GM12878 (cell line): ENCODE measurements at regions of chr6 and their contacts with region 1.

Region 1: GRCh38 chr6:11912426-11912825 is 99.7 kb upstream of the HIVEP1 start:
- DNase-seq: no peak
- ATAC-seq: no peak
- H3K4me3 ChIP-seq: no peak overlapping the region
- H3K27ac ChIP-seq: no peak overlapping the region
- H3K4me1 ChIP-seq: no peaks in the 10 kb centered on the region
- H3K27me3 ChIP-seq: no peaks in the 10 kb centered on the region
- CTCF ChIP-seq: no peak
- EP300 ChIP-seq: no peak
- POLR2A ChIP-seq: no peak
- RAD21 ChIP-seq: no peak

Region 2: GRCh38 chr6:11899645-11900044 is 12.8 kb before region 1 on chr6:
- CTCF ChIA-PET with region 1: no interaction called
- POLR2A ChIA-PET with region 1: no interaction called
- RAD21 ChIA-PET with region 1: no interaction called
- SMC1A ChIA-PET with region 1: no interaction called
- in situ Hi-C with region 1: no loop called
- intact Hi-C with region 1: no loop called
- DNase-seq: no peak
- ATAC-seq: no peak
- H3K4me3 ChIP-seq: no peak overlapping the region
- H3K27ac ChIP-seq: no peak overlapping the region
- H3K4me1 ChIP-seq: no peaks in the 10 kb centered on the region
- H3K27me3 ChIP-seq: no peaks in the 10 kb centered on the region
- CTCF ChIP-seq: no peak
- EP300 ChIP-seq: no peak
- POLR2A ChIP-seq: no peak
- RAD21 ChIP-seq: no peak

Region 3: GRCh38 chr6:11929241-11929850 is 16.9 kb after region 1 on chr6:
- CTCF ChIA-PET with region 1: no interaction called
- POLR2A ChIA-PET with region 1: no interaction called
- RAD21 ChIA-PET with region 1: no interaction called
- SMC1A ChIA-PET with region 1: interaction called, 14 read pairs
- in situ Hi-C with region 1: no loop called
- intact Hi-C with region 1: no loop called
- DNase-seq: no peak
- ATAC-seq: no peak
- H3K4me3 ChIP-seq: no peak overlapping the region
- H3K27ac ChIP-seq: no peak overlapping the region
- H3K4me1 ChIP-seq: no peaks in the 10 kb centered on the region
- H3K27me3 ChIP-seq: no peaks in the 10 kb centered on the region
- CTCF ChIP-seq: no peak
- EP300 ChIP-seq: no peak
- POLR2A ChIP-seq: no peak
- RAD21 ChIP-seq: no peak

Region 4: DNA sequence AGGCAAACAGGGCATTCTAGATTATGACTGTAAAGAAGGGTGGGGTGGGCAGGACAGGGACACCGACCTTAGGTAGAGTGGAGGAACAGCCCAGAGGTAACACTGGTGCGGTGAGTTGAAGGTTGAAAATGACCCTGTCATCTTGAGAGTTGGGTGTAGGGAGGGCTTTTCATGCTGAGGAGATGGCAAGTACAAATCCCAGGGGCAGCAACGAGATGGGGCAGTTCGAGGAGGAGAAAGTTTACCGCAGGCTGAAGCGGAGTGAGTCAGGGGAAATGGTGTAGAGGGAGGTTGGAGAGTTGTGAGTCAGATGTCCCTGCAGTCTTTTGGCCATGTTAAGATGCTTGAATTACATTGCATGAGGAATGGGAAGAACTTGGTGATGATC is 200.8 kb after region 1 on chr6:
- CTCF ChIA-PET with region 1: no interaction called
- POLR2A ChIA-PET with region 1: no interaction called
- RAD21 ChIA-PET with region 1: no interaction called
- SMC1A ChIA-PET with region 1: no interaction called
- in situ Hi-C with region 1: no loop called
- intact Hi-C with region 1: no loop called
- DNase-seq: no peak
- ATAC-seq: peak; percentile 60
- H3K4me3 ChIP-seq: peak overlapping the region; percentile 32; the same call in 1 of the 2 replicates
- H3K27ac ChIP-seq: peak overlapping the region; percentile 88
- H3K4me1 ChIP-seq: peaks cover 49% of the 10 kb centered on the region
- H3K27me3 ChIP-seq: no peaks in the 10 kb centered on the region
- CTCF ChIP-seq: no peak
- EP300 ChIP-seq: no peak
- POLR2A ChIP-seq: peak; percentile 41; the same call in 1 of the 2 replicates
- RAD21 ChIP-seq: no peak